ENCODE measurements at regions of chr3 and their contacts with region 1.

Region 1: GRCh38 chr3:23209747-23210487 is 6.8 kb downstream of the UBE2E2 start:
- DNase-seq: no peak
- H3K4me3 ChIP-seq: no peak overlapping the region
- H3K27ac ChIP-seq: no peak overlapping the region
- H3K4me1 ChIP-seq: peaks cover 4% of the 10 kb centered on the region
- H3K27me3 ChIP-seq: no peaks in the 10 kb centered on the region
- CTCF ChIP-seq: no peak
- POLR2A ChIP-seq: no peak

Region 2: GRCh38 chr3:23987356-23987755 is 777.4 kb after region 1 on chr3:
- intact Hi-C with region 1: loop called (anchors 5 kb)
- DNase-seq: no peak
- H3K4me3 ChIP-seq: no peak overlapping the region
- H3K27ac ChIP-seq: no peak overlapping the region
- H3K4me1 ChIP-seq: no peaks in the 10 kb centered on the region
- H3K27me3 ChIP-seq: no peaks in the 10 kb centered on the region
- CTCF ChIP-seq: no peak
- POLR2A ChIP-seq: no peak

Measured in vagina (tissue), 2 donors.